ENCODE measurements at regions of chr15 and their contacts with region 1.

Region 1: DNA sequence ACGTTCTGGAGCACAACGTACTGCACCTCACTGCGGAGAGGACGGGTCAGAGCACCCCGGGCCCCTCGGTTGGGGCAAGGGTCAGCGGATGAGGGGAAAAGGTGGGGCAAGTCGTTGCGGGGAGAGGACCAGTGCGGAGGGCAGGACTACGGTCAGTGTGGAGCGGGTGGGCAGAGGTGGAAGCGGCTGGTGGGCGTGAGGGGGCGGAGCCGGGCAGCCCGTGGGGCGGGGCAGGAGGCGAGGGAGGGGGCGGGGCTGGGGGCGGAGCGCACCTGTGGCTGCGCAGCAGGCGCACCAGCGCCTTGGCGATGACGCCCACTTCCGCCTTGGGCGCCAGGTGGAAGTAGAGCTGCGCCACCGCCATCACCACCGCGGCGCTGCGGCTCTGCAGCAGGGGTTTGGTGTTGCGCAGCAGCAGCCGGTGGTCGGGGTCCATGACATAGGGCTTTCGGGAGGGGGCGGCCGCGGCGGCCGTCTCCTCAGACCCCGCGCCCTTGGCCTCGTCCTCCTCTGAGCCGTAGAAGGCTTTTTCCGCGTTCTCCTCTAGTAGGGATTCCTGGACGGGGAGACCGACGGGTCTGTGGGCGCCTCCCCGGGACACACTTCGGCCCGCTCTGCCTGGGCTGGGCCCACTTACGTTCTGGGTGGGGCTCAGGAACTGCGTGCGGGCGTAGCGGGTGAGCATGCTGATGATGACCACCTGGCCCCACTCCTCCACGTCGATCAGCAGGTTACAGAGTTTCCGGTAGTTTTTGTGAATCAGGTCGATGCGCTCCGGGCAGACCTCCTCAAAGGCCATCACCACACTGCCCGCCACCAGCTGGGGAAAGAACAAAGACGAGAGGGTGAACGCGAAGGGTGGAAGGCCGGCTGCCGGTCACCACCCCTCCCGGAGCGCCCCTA is 29.2 kb downstream of the AP3B2 start:
- DNase-seq: peak; percentile 47 to 88 (median 82)
- ATAC-seq: peak; percentile 98
- H3K4me3 ChIP-seq: peak overlapping the region; percentile 97
- H3K4me3 Mint-ChIP-seq: peak overlapping the region; percentile 82 to 96 (median 93)
- H3K27ac ChIP-seq: peak overlapping the region; percentile 83
- H3K27ac Mint-ChIP-seq: peak overlapping the region in 8 of 9 donors; percentile 91 to 97 (median 94)
- H3K4me1 ChIP-seq: peaks cover 9% of the 10 kb centered on the region in 2 donors
- H3K4me1 Mint-ChIP-seq: peaks cover 0 to 19% (median 14%) of the 10 kb centered on the region in 7 donors
- H3K27me3 ChIP-seq: no peaks in the 10 kb centered on the region
- H3K27me3 Mint-ChIP-seq: peaks cover 0 to 42% (median 0%) of the 10 kb centered on the region in 5 donors

Region 2: GRCh38 chr15:82108489-82109078 is 571.9 kb before region 1 on chr15:
- CTCF ChIA-PET with region 1: no interaction called
- POLR2A ChIA-PET with region 1: no interaction called
- intact Hi-C with region 1: no loop called
- DNase-seq: peak; percentile 11 to 79 (median 55)
- ATAC-seq: peak; percentile 92
- H3K4me3 ChIP-seq: no peak overlapping the region
- H3K4me3 Mint-ChIP-seq: no peak overlapping the region
- H3K27ac ChIP-seq: no peak overlapping the region
- H3K27ac Mint-ChIP-seq: no peak overlapping the region
- H3K4me1 ChIP-seq: no peaks in the 10 kb centered on the region
- H3K4me1 Mint-ChIP-seq: peaks cover 0 to 3% (median 0%) of the 10 kb centered on the region in 7 donors
- H3K27me3 ChIP-seq: peaks cover 0 to 3% of the 10 kb centered on the region in 2 donors
- H3K27me3 Mint-ChIP-seq: no peaks in the 10 kb centered on the region

Region 3: DNA sequence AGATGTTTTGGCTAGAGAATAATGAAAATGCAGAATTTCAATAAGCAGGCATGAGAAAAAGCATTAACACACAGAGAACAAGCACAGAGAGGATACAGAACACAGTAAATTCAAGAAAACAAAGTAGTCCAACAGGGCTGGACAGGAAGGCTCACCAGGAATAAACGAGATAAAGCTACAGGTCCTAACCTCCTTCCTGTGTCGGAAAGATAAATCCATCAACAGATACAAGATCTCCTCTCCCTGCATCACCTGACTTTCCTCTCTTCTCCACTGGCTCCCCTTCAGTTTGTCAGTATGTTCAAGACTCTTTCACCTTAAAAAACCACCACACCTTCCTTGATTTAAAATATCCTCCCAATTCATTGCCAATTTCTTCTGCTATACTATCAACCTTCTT is 44.7 kb before region 1 on chr15:
- CTCF ChIA-PET with region 1: no interaction called
- POLR2A ChIA-PET with region 1: no interaction called
- intact Hi-C with region 1: no loop called
- DNase-seq: no peak
- ATAC-seq: no peak
- H3K4me3 ChIP-seq: no peak overlapping the region
- H3K4me3 Mint-ChIP-seq: no peak overlapping the region
- H3K27ac ChIP-seq: no peak overlapping the region
- H3K27ac Mint-ChIP-seq: no peak overlapping the region
- H3K4me1 ChIP-seq: no peaks in the 10 kb centered on the region
- H3K4me1 Mint-ChIP-seq: no peaks in the 10 kb centered on the region
- H3K27me3 ChIP-seq: no peaks in the 10 kb centered on the region
- H3K27me3 Mint-ChIP-seq: peaks cover 33 to 52% (median 45%) of the 10 kb centered on the region in 5 donors

Region 4: DNA sequence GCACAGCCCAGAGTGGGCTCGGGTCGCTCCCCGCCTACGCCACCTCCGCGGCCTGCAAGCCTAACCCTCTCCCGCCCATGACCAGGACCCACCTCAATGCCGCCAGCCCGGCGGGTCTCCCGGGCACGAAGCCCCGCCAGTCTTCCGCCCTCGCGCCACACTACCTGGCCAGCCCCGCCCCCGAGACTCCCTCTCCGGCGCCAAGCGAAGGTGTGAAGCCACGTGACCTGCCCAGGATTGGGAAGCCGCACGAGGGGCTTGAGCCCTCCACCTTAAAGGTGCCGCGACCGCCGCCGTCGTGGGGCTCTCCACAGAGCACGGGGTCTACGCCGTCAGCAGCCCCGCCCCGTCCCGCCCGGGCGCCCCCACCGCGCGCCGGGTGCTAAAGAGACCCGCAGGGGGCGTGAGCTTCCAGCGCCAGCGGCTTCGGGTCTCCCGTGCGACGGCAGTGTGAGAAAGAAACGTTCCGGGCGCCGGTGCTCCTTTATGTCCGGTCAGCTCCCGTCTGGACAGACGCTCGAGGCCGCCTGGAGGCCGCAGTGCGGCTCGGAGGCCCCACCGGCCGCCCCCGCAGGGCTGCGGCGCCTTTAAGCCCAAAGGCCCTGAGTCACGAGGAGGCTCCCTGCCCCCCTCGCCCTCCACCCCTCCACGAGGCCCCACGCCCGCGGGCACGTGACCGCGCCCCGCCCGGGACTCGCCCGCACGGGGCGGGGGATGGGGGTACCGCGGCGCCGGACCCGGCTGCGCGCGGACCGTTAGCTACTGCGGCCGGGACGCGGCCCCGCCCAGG is 33.2 kb before region 1 on chr15 and contains the start of gene CPEB1:
- CTCF ChIA-PET with region 1: interaction called, 3 read pairs
- POLR2A ChIA-PET with region 1: interaction called, 3 read pairs
- intact Hi-C with region 1: loop called in 1 of 2 experiments (anchors 1 kb)
- DNase-seq: peak; percentile 4 to 33 (median 26)
- ATAC-seq: peak; percentile 68
- H3K4me3 ChIP-seq: peak within 1 kb of the TSS; percentile 47
- H3K4me3 Mint-ChIP-seq: peak within 1 kb of the TSS; percentile 62 to 85 (median 71)
- H3K27ac ChIP-seq: no peak within 1 kb of the TSS
- H3K27ac Mint-ChIP-seq: peak within 1 kb of the TSS in 2 of 9 donors; percentile 59 to 62
- H3K4me1 ChIP-seq: peaks cover 0 to 14% of the 10 kb centered on the region in 2 donors
- H3K4me1 Mint-ChIP-seq: peaks cover 0 to 9% (median 4%) of the 10 kb centered on the region in 7 donors
- H3K27me3 ChIP-seq: peaks cover 5 to 15% of the 10 kb centered on the region in 2 donors
- H3K27me3 Mint-ChIP-seq: peaks cover 21 to 69% (median 41%) of the 10 kb centered on the region in 5 donors
- total RNA-seq, gene CPEB1: 0.24 to 1.0 (median 0.51) TPM in 4 of 5 experiments, not detected in the other

Region 5: DNA sequence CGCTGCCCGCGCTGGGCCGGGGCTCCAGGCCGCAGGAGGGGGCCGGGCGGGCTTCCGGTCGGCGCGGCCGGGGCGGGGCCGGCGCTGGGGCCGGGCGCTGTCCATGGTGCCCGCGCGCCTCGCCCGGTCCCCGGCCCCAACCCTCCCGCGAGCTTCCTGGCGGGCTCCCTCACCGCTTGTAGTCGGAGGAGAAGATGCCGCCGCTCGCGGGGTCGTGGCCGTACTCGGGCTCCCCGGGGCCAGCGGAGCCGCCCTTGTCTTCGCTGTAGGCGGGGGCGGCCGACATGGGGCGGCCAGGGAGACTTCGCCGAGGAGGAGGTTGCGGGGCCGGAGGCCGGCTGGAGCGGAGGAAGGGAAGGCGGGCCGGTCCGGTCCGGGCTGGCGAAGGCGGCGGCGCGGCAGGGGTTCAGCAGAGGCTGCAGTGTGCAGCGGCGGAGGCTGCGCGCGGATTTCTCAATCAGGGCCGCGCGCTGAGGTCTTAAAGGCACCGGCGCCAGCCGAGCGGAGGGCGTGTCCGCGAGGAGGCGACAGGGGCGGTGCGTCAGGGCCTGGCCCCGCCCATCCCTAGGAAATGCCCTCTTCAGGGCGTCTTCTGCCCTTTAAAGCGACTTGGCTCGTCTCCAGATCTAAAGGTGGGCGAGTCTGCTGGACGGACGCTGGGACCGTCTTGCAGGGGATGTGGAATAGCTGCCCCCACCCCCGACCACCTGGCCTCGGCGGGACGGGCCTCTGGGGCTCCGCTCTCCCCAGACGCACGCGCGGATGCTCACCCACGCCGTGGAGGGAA is 29.2 kb after region 1 on chr15 and contains the start of gene AP3B2:
- CTCF ChIA-PET with region 1: no interaction called
- POLR2A ChIA-PET with region 1: interaction called, 4 read pairs
- intact Hi-C with region 1: loop called (anchors 1 kb)
- DNase-seq: peak; percentile 28 to 73 (median 56)
- ATAC-seq: peak; percentile 93
- H3K4me3 ChIP-seq: peak within 1 kb of the TSS; percentile 61
- H3K4me3 Mint-ChIP-seq: peak within 1 kb of the TSS in 9 of 10 donors; percentile 51 to 87 (median 67)
- H3K27ac ChIP-seq: peak within 1 kb of the TSS; percentile 7
- H3K27ac Mint-ChIP-seq: no peak within 1 kb of the TSS
- H3K4me1 ChIP-seq: peaks cover 0 to 4% of the 10 kb centered on the region in 2 donors
- H3K4me1 Mint-ChIP-seq: peaks cover 0 to 8% (median 0%) of the 10 kb centered on the region in 7 donors
- H3K27me3 ChIP-seq: peaks cover 0 to 2% of the 10 kb centered on the region in 2 donors
- H3K27me3 Mint-ChIP-seq: peaks cover 0 to 32% (median 18%) of the 10 kb centered on the region in 5 donors
- total RNA-seq, gene AP3B2: 0.56 to 1.2 (median 0.85) TPM in 4 of 5 experiments, not detected in the other

Region 6: DNA sequence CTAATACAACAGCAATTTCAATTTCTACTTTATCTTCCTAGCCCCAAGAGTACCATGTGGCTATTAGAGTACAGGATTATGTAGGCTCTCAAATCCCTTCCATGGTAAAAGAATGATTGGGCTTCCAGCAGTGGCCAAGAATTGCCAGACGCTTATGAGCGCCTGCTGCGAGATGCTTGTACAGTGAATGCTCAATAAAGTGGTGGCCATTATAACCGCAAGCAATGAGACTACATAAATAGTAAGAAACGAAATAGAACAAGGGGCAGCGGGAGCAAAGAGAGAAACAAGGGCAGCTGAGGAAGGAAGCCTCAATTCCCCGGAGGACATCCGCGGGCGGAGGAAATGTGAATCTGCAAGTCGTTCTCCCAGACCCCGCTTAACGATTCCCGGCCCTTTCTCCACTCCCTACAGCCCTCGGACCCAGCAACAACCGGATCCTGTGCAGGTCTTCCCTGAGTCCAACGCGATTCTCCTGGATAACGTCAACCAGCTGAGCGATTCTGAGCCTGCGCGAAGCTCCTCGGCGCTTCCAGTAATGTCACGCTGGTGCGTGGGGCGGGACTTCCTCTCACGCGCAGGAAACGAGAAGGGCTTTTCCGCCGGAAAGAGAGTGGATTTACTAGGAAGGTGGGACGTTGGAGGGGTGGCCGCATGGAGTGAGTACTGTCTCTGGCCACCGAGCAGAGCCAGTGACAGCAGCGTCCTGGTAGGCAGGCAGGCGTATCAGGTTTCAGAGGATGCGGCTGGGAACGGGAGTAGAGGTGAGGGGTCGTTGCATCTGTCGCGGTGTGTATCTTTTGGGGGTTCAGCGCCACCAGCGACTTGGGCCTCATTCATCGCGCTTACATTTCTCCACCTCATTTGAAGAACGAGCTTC is 69.7 kb after region 1 on chr15:
- CTCF ChIA-PET with region 1: no interaction called
- POLR2A ChIA-PET with region 1: interaction called, 12 read pairs
- intact Hi-C with region 1: loop called in 1 of 2 experiments (anchors 1 kb)
- DNase-seq: peak; percentile 51 to 84 (median 70)
- ATAC-seq: peak; percentile 96
- H3K4me3 ChIP-seq: peak overlapping the region; percentile 88
- H3K4me3 Mint-ChIP-seq: peak overlapping the region; percentile 93 to 100 (median 98)
- H3K27ac ChIP-seq: peak overlapping the region; percentile 78
- H3K27ac Mint-ChIP-seq: peak overlapping the region; percentile 89 to 98 (median 95)
- H3K4me1 ChIP-seq: peaks cover 10 to 15% of the 10 kb centered on the region in 2 donors
- H3K4me1 Mint-ChIP-seq: peaks cover 26 to 69% (median 57%) of the 10 kb centered on the region in 7 donors
- H3K27me3 ChIP-seq: no peaks in the 10 kb centered on the region
- H3K27me3 Mint-ChIP-seq: no peaks in the 10 kb centered on the region

Measured in naive thymus-derived CD4-positive, alpha-beta T cell (primary cell).